ENCODE measurements at regions of chr5 and their contacts with region 1.

Region 1: DNA sequence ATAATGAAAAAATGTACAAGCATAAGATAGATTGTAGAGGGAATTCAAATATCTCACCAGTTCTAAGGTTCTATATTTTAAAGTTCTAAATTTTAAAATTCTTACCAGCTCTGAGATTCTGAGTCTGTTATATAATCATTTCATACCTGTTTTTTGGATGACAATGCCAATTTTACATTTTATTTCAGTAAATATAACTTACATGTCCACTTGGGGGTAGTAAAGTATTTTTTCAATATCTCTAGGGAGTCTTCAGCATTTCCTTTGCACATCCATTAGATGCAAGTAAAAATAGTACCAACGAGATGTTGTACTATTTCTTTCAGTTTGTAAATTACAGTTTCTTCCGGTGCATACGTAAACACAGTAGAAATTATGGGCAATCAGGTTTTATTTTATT is 25.7 kb downstream of the NMUR2 start:
- H3K4me3 ChIP-seq: no peak overlapping the region
- H3K27ac ChIP-seq: no peak overlapping the region
- H3K4me1 ChIP-seq: no peaks in the 10 kb centered on the region
- CTCF ChIP-seq: no peak

Region 2: DNA sequence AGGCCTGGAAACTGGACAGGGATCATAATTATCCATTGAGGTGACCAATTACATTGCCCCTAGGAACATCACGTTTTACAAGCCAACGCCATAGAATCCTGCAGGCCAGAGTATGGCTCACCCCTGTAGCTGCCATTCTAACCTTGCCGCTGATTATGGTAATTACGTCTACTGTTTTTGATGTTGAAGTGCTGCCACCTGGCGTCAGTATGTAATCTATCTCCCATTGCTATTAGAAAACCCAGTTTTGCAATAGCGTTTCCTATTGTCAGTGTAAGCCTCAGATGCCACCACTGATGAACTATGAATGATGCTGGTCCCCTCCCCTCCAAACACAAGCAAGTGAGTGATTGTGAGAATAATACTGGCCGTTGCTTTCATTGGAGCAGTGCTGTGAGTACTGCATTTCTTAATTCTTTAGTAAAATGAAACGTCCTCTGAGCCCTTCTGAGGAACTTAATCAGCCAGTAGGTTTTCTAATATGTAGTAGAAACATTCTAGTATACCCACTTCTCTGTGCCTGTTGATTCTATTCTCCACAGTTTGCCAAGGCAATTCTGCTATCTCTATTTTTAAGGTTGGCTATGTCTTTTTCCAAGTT is 126.2 kb after region 1 on chr5:
- CTCF ChIA-PET with region 1: interaction called, 14 read pairs
- POLR2A ChIA-PET with region 1: no interaction called
- H3K4me3 ChIP-seq: no peak overlapping the region
- H3K27ac ChIP-seq: no peak overlapping the region
- H3K4me1 ChIP-seq: no peaks in the 10 kb centered on the region
- CTCF ChIP-seq: 0 out of 2 replicates have a peak, but pooled peaks have one; percentile 14

Region 3: DNA sequence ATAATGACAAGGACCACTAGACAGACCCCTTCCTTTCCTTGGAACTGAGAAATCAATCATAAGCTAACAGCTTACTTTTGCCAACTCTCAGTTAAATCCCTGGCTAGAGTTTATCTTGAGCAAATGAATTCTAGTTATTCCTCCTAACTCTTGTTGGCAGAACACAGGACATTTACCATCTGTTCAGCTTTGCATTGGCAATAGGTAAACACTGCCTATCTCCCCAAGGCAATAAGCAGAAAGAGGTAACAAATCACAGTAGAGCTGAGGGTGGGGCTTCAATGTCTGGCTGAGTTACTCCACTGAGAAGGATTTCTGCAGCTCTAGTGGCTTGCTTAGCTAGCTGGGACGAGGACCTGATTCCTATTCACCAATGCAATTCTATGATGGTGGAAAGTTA is 607.8 kb after region 1 on chr5:
- CTCF ChIA-PET with region 1: no interaction called
- POLR2A ChIA-PET with region 1: no interaction called
- H3K4me3 ChIP-seq: no peak overlapping the region
- H3K27ac ChIP-seq: no peak overlapping the region
- H3K4me1 ChIP-seq: no peaks in the 10 kb centered on the region
- CTCF ChIP-seq: no peak